Dorsolateral prefrontal cortex (tissue), 120 donors: ENCODE measurements at regions of chr4 and their contacts with region 1.

Region 1: DNA sequence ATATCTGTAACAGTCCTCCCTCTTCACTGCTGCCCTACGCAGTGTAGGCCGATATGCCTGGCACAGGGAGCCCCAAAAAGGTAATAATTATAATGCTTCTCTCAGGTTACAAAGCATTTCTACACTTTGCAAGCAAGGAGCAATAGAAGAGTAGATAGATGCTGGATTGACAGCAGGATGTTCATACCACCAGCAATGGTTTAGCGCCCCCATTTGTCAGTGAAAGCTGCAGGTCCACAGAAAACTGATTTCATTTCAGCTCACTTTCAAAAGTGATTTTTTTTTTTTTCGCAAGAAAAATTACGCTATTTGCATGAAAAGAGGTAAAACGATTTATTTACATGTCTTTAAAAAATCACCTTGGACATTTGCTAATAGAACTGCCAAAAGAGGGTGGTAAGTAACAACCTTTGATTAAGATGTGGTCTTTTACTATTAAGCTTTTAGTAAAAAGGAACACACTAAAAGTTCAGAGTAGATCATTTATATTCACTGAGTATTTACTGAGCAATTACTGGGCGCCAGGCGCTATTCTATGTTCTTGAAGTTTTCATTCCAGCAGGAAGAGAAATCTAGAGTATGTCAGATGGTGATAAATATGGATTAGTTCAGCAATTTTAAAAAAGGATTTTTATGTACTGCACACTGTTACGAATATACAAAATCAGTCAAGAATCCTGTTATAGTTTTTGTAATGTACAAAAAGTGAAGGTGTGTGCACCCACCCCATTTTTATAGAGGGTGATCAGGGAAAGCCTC is 34.4 kb downstream of the HPF1 start:
- DNase-seq: no peak
- H3K4me3 ChIP-seq: no peak overlapping the region
- H3K27ac ChIP-seq: peak overlapping the region in 1 of 59 donors; percentile 26
- H3K27me3 ChIP-seq: no peaks in the 10 kb centered on the region
- CTCF ChIP-seq: peak in 45 of 56 donors; percentile 10 to 61 (median 33)

Region 2: DNA sequence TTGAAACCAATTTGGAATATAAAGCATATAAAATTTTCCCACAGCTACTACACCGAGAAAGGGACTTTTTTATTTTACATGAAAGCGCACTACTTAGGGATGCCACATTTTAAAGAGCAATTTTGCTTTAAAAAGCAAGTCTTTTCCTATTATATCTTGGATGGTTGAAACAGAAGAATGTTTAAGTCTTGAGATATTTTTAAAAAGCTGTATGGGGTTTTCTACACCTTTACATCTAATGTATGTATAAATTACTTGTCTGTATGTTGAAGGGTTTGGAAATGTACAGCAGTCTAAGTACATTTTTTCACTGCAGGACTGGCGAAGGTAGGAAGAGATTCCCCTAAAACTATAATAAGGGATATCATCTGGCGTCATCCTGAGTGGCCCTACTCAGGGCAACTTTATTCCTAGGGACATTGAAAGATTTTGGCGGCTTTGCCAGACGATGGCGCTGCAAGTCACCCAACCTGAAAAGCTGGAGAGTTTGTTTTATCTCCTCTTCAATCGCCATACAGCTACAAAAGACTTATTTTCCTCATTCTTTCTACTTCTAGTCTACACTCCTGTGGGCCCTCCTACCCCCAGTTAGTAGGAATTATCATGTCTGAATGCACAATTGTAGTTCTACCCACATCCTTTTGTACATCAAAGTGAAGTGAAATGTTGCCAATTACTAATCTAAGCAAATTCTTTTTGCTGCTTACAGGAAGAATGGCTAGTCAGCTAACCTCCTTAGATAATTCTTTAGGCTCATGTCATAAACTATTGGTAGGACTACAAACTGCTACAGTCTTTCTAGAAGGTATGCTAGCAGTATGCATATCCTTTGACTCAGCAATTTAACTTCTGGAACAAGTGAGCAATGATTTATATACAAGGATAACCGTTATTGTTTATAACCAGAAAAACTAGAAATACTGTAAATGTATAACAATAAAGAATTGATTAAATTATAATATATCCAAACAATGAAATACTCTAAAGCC is 110.2 kb before region 1 on chr4:
- intact Hi-C with region 1: loop called in 1 of 2 experiments (anchors 5 kb)
- DNase-seq: peak; percentile 65 to 87 (median 80)
- H3K4me3 ChIP-seq: peak overlapping the region; percentile 56 to 97 (median 87)
- H3K27ac ChIP-seq: peak overlapping the region in 58 of 59 donors; percentile 34 to 99 (median 91)
- H3K27me3 ChIP-seq: no peaks in the 10 kb centered on the region
- CTCF ChIP-seq: peak; percentile 35 to 86 (median 80)

Region 3: DNA sequence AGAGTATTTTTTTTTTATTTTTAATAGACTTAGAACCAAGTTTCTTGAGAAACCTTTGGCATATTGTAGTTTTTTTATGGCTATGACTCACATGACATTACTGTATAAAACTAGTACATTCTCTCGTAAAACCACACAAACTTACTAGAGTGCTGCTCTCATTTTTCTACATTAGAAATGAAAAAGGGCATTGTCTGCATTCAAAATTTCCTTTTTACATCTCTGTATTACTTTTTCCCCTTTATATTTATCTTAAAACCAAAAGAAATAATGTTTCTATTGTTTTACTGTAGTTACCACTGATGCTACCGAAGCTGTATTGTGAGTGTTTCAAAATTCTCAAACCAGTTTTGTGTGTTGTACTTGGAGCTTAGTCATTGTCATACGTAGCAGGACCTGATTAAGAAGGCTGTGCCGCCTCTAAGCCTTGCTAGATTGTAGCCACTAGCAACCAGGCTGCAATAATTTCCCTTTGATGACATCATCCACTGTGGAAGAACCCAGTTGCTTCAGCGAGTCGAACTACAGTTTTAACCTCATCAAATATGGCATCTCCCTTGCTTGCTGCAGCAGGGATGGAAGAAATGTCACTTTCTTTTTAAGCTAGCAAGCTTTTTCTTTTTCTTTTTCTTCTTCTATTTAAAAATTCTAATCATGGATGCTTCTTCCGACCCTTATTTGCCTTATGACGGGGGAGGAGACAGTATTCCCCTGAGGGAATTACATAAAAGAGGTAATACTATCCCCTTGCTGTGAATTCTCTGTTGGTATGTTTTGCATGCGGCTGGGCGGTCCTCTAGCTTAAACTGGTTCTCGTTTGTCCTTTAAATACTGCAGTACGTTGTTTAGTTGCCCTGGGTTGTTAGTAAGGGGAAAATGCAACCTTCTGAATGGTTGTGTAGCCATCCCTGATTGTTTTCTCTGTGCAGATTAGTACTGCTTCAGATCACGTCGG is 63.4 kb before region 1 on chr4:
- intact Hi-C with region 1: loop called in 1 of 2 experiments (anchors 10 kb)
- DNase-seq: peak in 8 of 10 donors; percentile 53 to 82 (median 62)
- H3K4me3 ChIP-seq: peak overlapping the region; percentile 14 to 81 (median 66)
- H3K27ac ChIP-seq: peak overlapping the region; percentile 51 to 95 (median 87)
- H3K27me3 ChIP-seq: no peaks in the 10 kb centered on the region
- CTCF ChIP-seq: peak in 9 of 56 donors; percentile 4 to 45 (median 11)

Region 4: DNA sequence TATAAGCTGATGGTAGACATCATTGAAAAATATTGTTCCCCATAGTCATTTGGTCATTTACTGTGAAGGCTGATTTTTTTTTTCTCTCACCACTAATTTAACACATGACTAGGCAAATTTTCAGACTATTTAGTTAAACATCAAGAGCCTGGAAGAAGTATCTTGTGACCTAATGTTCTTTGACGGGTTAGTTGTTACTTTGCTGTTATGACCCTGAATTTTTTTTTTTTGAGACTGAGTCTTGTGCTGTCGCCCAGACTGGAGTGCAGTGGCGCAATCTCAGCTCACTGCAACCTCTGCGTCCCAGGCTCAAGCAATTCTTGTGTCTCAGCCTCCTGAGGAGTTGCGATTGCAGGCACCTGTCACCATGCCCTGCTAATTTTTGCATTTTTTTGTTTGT is 32.6 kb before region 1 on chr4:
- intact Hi-C with region 1: no loop called
- DNase-seq: no peak
- H3K4me3 ChIP-seq: no peak overlapping the region
- H3K27ac ChIP-seq: no peak overlapping the region
- H3K27me3 ChIP-seq: no peaks in the 10 kb centered on the region
- CTCF ChIP-seq: no peak